PC-3 (cell line): ENCODE measurements at regions of chr7 and their contacts with region 1.

Region 1: GRCh38 chr7:18481776-18482175 is 13.8 kb upstream of the HDAC9 start:
- DNase-seq: no peak
- ATAC-seq: no peak
- H3K4me3 ChIP-seq: no peak overlapping the region
- H3K27ac ChIP-seq: no peak overlapping the region
- H3K4me1 ChIP-seq: no peaks in the 10 kb centered on the region
- H3K27me3 ChIP-seq: no peaks in the 10 kb centered on the region
- CTCF ChIP-seq: no peak

Region 2: GRCh38 chr7:18257711-18258110 is 224.1 kb before region 1 on chr7:
- CTCF ChIA-PET with region 1: no interaction called
- POLR2A ChIA-PET with region 1: no interaction called
- intact Hi-C with region 1: no loop called
- DNase-seq: peak; percentile 65
- ATAC-seq: peak; percentile 100
- H3K4me3 ChIP-seq: no peak overlapping the region
- H3K27ac ChIP-seq: no peak overlapping the region
- H3K4me1 ChIP-seq: peaks cover 10% of the 10 kb centered on the region
- H3K27me3 ChIP-seq: no peaks in the 10 kb centered on the region
- CTCF ChIP-seq: no peak

Region 3: DNA sequence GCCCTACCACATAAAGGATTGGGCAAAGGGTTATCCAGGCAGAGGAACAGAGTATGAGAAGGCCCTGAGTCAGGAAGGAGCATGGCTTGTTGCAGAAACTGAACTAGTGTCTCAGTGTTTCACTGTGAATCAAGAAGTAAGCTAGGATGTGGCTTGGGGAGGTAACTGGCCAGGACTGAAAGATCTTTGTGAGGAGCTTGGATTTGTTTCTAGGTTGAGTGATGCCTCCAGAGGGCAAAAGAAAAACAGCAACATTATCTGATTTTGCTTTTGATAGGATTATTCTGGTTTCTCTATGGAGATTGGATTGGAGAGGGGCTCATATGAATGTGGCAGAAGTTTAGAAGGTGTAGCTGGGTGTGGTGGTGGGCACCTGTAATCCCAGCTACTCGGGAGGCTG is 124.1 kb before region 1 on chr7:
- CTCF ChIA-PET with region 1: interaction called, 11 read pairs
- POLR2A ChIA-PET with region 1: no interaction called
- intact Hi-C with region 1: no loop called
- DNase-seq: peak; percentile 53
- ATAC-seq: peak; percentile 52
- H3K4me3 ChIP-seq: no peak overlapping the region
- H3K27ac ChIP-seq: no peak overlapping the region
- H3K4me1 ChIP-seq: peaks cover 11% of the 10 kb centered on the region
- H3K27me3 ChIP-seq: no peaks in the 10 kb centered on the region
- CTCF ChIP-seq: peak; percentile 57